CD8-positive, alpha-beta T cell (primary cell): ENCODE measurements at regions of chr19 and their contacts with region 1.

Region 1: DNA sequence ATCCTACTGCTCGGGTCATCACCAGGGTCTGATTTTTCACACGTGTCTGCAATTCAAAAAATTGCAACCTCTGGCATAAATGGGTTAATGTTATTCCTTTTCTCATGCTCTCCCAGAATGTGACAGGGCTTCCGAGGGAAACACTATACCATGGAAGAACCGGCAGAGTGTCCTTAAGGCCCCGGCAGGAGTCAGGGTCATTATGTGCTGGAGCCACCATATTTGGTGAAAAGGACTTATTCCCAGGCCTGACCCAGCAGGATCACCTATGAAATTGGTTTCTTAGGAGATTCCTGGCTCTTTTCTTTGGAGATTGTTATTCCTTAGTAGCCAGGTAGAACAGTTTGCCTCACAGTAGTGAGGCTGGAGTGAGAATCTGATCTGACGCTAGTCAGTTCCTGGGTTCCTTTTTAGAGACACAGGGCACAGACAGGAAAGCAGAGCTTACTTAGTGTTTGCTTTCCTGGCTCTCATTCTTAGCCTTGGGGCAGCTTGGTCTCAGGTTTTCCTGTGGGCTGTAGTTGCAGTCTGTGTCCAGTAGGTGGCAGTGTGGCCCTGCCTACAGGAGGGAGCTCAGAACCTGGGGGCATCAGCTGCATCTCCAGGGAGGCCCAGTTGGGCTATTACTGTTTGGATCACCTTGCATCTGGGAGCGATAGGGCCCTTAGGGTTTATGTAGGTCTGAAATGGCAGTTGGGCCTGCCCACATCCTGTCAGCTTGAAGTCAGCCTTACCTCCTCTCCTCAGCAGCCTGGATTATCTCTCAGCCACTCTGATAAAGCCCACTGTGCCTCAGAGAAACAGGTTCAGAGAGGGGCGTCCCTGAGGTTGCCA is 12.4 kb downstream of the SNRNP70 start:
- DNase-seq: peak; percentile 54 to 83 (median 74)
- ATAC-seq: peak; percentile 98
- H3K4me3 ChIP-seq: no peak overlapping the region
- H3K4me3 Mint-ChIP-seq: no peak overlapping the region
- H3K27ac ChIP-seq: no peak overlapping the region
- H3K27ac Mint-ChIP-seq: peak overlapping the region; percentile 49
- H3K4me1 ChIP-seq: no peaks in the 10 kb centered on the region
- H3K4me1 Mint-ChIP-seq: peaks cover 7% of the 10 kb centered on the region
- H3K27me3 ChIP-seq: no peaks in the 10 kb centered on the region
- H3K27me3 Mint-ChIP-seq: no peaks in the 10 kb centered on the region
- CTCF ChIP-seq: peak; percentile 96

Region 2: GRCh38 chr19:49085020-49085867 is 12.4 kb before region 1 on chr19 and contains the start of gene SNRNP70:
- CTCF ChIA-PET with region 1: interaction called, 28 read pairs
- POLR2A ChIA-PET with region 1: interaction called, 3 read pairs
- intact Hi-C with region 1: no loop called
- DNase-seq: peak; percentile 97 to 100 (median 99)
- ATAC-seq: peak; percentile 97
- H3K4me3 ChIP-seq: peak within 1 kb of the TSS; percentile 85 to 91
- H3K4me3 Mint-ChIP-seq: peak within 1 kb of the TSS; percentile 96
- H3K27ac ChIP-seq: peak within 1 kb of the TSS; percentile 74 to 90
- H3K27ac Mint-ChIP-seq: peak within 1 kb of the TSS; percentile 96
- H3K4me1 ChIP-seq: peaks cover 33% of the 10 kb centered on the region
- H3K4me1 Mint-ChIP-seq: peaks cover 33% of the 10 kb centered on the region
- H3K27me3 ChIP-seq: no peaks in the 10 kb centered on the region
- H3K27me3 Mint-ChIP-seq: peaks cover 4% of the 10 kb centered on the region
- CTCF ChIP-seq: no peak
- total RNA-seq, gene SNRNP70: 341 to 350 TPM

Region 3: DNA sequence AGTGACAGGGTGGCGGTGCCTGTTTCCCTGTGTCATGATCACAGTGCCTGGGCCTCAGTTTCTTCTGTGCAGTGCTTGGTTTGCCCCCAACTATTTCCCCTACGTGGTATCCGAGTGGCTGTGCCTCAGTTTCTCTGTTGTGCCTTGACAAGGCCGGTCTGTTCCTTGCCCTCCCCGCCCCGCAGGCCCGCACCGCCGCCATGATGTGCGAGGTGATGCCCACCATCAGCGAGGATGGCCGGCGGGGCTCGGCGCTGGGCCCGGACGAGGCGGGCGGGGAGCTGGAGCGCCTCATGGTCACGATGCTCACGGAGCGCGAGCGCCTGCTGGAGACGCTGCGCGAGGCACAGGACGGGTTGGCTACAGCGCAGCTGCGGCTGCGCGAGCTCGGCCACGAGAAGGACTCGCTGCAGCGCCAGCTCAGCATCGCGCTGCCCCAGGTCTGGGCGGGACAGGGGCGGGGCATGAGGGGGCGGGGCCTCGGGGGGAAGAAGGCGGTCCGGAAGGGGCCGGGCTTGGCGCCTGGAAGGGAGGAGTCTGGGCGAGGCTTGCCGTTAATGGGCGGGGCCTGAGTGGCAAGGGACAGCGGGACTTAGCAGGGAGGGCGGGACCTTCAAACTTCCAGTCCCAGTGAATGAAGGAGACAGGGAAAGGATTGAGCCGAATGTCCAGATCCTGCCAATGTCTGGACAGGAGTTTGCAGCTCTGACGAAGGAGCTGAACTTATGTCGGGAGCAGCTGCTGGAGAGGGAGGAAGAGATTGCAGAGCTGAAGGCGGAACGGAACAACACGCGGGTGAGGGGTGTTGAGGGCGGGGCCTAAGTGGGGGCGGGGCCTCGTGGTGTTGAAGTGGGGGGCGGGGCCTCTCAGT is 30.2 kb after region 1 on chr19:
- CTCF ChIA-PET with region 1: interaction called, 20 read pairs
- POLR2A ChIA-PET with region 1: interaction called, 3 read pairs
- intact Hi-C with region 1: no loop called
- DNase-seq: peak; percentile 88 to 97 (median 91)
- ATAC-seq: peak; percentile 96
- H3K4me3 ChIP-seq: peak overlapping the region; percentile 51 to 56
- H3K4me3 Mint-ChIP-seq: peak overlapping the region; percentile 79
- H3K27ac ChIP-seq: no peak overlapping the region
- H3K27ac Mint-ChIP-seq: peak overlapping the region; percentile 80
- H3K4me1 ChIP-seq: peaks cover 11% of the 10 kb centered on the region
- H3K4me1 Mint-ChIP-seq: peaks cover 17% of the 10 kb centered on the region
- H3K27me3 ChIP-seq: no peaks in the 10 kb centered on the region
- H3K27me3 Mint-ChIP-seq: no peaks in the 10 kb centered on the region
- CTCF ChIP-seq: no peak

Region 4: GRCh38 chr19:49148784-49149651 is 51.3 kb after region 1 on chr19:
- CTCF ChIA-PET with region 1: interaction called, 57 read pairs
- POLR2A ChIA-PET with region 1: interaction called, 3 read pairs
- intact Hi-C with region 1: loop called (anchors 1 kb)
- DNase-seq: peak; percentile 53 to 86 (median 77)
- ATAC-seq: peak; percentile 61
- H3K4me3 ChIP-seq: peak overlapping the region; percentile 60 to 64
- H3K4me3 Mint-ChIP-seq: peak overlapping the region; percentile 78
- H3K27ac ChIP-seq: no peak overlapping the region
- H3K27ac Mint-ChIP-seq: no peak overlapping the region
- H3K4me1 ChIP-seq: peaks cover 47% of the 10 kb centered on the region
- H3K4me1 Mint-ChIP-seq: peaks cover 34% of the 10 kb centered on the region
- H3K27me3 ChIP-seq: peaks cover 36 to 39% of the 10 kb centered on the region in 2 experiments
- H3K27me3 Mint-ChIP-seq: peaks cover 65% of the 10 kb centered on the region
- CTCF ChIP-seq: no peak

Region 5: DNA sequence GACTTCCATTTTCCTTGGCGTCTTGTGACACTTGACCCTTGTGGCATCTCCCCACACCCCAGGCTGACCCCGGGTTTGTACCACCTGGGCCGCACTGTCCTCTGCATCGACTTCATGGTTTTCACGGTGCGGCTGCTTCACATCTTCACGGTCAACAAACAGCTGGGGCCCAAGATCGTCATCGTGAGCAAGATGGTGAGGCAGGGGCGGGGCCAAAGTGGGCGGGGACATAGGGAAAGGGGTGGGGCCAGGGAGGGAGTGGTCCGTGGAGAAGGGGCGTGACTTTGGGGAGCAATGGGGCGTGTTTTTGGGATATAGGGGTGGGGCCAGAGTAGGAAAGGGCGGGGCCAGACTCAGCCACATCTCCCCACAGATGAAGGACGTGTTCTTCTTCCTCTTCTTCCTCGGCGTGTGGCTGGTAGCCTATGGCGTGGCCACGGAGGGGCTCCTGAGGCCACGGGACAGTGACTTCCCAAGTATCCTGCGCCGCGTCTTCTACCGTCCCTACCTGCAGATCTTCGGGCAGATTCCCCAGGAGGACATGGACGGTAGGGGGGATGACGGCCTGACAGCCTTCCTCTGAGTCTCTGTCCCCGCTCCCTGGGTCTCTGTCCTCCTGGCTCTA is 102.7 kb after region 1 on chr19:
- CTCF ChIA-PET with region 1: interaction called, 29 read pairs
- POLR2A ChIA-PET with region 1: interaction called, 4 read pairs
- intact Hi-C with region 1: loop called (anchors 1 kb)
- DNase-seq: peak in 2 of 9 experiments; percentile 28 to 32
- ATAC-seq: no peak
- H3K4me3 ChIP-seq: no peak overlapping the region
- H3K4me3 Mint-ChIP-seq: no peak overlapping the region
- H3K27ac ChIP-seq: no peak overlapping the region
- H3K27ac Mint-ChIP-seq: no peak overlapping the region
- H3K4me1 ChIP-seq: no peaks in the 10 kb centered on the region
- H3K4me1 Mint-ChIP-seq: peaks cover 2% of the 10 kb centered on the region
- H3K27me3 ChIP-seq: no peaks in the 10 kb centered on the region
- H3K27me3 Mint-ChIP-seq: peaks cover 11% of the 10 kb centered on the region
- CTCF ChIP-seq: no peak